PC-3 (cell line): ENCODE measurements at regions of chr2 and their contacts with region 1.

Region 1: GRCh38 chr2:215657844-215658243 is 222.0 kb upstream of the FN1 start:
- DNase-seq: peak; percentile 87
- ATAC-seq: peak; percentile 85
- H3K4me3 ChIP-seq: no peak overlapping the region
- H3K27ac ChIP-seq: peak overlapping the region; percentile 8; the same call in 1 of the 2 replicates
- H3K4me1 ChIP-seq: peaks cover 14% of the 10 kb centered on the region
- H3K27me3 ChIP-seq: no peaks in the 10 kb centered on the region
- CTCF ChIP-seq: no peak

Region 2: DNA sequence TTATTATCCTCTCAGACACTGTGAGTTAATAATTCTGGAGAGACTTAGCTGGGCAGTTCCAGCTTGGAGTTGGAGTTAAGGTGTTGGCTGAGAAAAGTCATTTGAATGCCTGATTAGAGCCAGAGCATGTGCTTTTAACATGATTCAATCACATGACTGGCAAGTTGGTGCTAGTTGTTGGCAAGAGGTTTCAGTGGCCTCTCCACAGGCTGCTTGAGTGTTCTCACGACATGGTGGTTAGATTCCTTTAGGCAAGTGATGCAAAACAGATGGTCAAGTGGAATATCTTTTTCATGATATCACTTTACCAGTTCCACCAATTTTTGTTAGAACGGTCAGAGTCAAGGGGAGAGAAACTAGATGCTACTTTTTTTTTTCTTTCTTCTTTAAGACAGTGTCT is 40.7 kb after region 1 on chr2:
- CTCF ChIA-PET with region 1: interaction called, 3 read pairs
- POLR2A ChIA-PET with region 1: interaction called, 5 read pairs
- intact Hi-C with region 1: loop called (anchors 1 kb)
- DNase-seq: no peak
- ATAC-seq: no peak
- H3K4me3 ChIP-seq: no peak overlapping the region
- H3K27ac ChIP-seq: no peak overlapping the region
- H3K4me1 ChIP-seq: peaks cover 26% of the 10 kb centered on the region
- H3K27me3 ChIP-seq: no peaks in the 10 kb centered on the region
- CTCF ChIP-seq: no peak